Caco-2 (cell line): ENCODE measurements at regions of chr1 and their contacts with region 1.

Region 1: GRCh38 chr1:40668769-40669525 is 3.5 kb upstream of the RIMS3 start:
- DNase-seq: peak; percentile 55 to 70
- H3K4me3 ChIP-seq: no peak overlapping the region
- H3K4me3 Mint-ChIP-seq: no peak overlapping the region
- H3K27ac Mint-ChIP-seq: no peak overlapping the region
- H3K4me1 ChIP-seq: no peaks in the 10 kb centered on the region
- H3K4me1 Mint-ChIP-seq: no peaks in the 10 kb centered on the region
- H3K27me3 ChIP-seq: no peaks in the 10 kb centered on the region
- H3K27me3 Mint-ChIP-seq: peaks cover 4% of the 10 kb centered on the region
- CTCF ChIP-seq: peak; percentile 65 to 77

Region 2: DNA sequence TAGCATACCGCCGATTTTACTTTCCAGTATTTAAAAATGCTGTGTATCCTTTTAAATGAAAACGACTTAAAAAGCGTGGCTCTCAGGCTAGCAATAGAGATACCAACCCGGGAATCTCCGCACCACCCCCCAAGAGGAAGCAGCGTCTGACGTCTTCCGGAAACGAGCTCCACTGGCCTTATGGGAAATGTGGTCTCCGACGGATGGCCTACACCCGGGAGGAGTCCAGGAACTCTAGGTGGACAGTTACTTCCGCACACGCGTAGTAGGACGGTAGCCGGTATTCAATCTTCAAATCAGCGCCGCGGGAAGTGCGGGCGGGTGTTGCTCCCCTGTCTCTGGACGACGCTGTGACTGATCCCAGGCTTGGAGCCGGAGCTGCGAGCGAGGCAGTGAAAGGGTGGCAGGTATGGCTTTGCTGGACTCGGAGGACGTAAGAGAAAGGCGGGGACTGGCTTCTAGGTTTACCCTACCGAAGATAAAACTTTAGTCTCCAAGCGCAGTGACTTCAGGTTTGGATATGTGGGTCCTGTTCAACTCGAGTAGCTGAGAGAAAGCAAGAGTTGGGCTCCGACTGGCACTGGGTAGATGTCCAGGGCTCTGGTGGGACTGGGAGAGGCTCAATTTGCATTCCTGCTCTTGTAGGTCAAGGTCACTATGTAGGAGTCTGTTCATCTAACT is 137.4 kb before region 1 on chr1 and contains the start of gene ZNF684:
- CTCF ChIA-PET with region 1: no interaction called
- POLR2A ChIA-PET with region 1: no interaction called
- intact Hi-C with region 1: loop called (anchors 5 kb)
- DNase-seq: peak; percentile 81 to 91
- H3K4me3 ChIP-seq: peak within 1 kb of the TSS; percentile 47
- H3K4me3 Mint-ChIP-seq: peak within 1 kb of the TSS; percentile 88
- H3K27ac Mint-ChIP-seq: peak within 1 kb of the TSS; percentile 89
- H3K4me1 ChIP-seq: 0 out of 2 replicates have a peak, but pooled peaks cover 6% of the 10 kb centered on the region
- H3K4me1 Mint-ChIP-seq: no peaks in the 10 kb centered on the region
- H3K27me3 ChIP-seq: no peaks in the 10 kb centered on the region
- H3K27me3 Mint-ChIP-seq: peaks cover 2% of the 10 kb centered on the region
- CTCF ChIP-seq: no peak
- total RNA-seq, gene ZNF684: 2.6 and 3.2 TPM in 2 replicates

Region 3: GRCh38 chr1:40630488-40631381 is 38.2 kb before region 1 on chr1:
- CTCF ChIA-PET with region 1: no interaction called
- POLR2A ChIA-PET with region 1: no interaction called
- intact Hi-C with region 1: loop called (anchors 5 kb)
- DNase-seq: peak; percentile 14 to 21
- H3K4me3 ChIP-seq: no peak overlapping the region
- H3K4me3 Mint-ChIP-seq: no peak overlapping the region
- H3K27ac Mint-ChIP-seq: no peak overlapping the region
- H3K4me1 ChIP-seq: no peaks in the 10 kb centered on the region
- H3K4me1 Mint-ChIP-seq: no peaks in the 10 kb centered on the region
- H3K27me3 ChIP-seq: no peaks in the 10 kb centered on the region
- H3K27me3 Mint-ChIP-seq: no peaks in the 10 kb centered on the region
- CTCF ChIP-seq: peak in 1 of 2 experiments; percentile 11

Region 4: DNA sequence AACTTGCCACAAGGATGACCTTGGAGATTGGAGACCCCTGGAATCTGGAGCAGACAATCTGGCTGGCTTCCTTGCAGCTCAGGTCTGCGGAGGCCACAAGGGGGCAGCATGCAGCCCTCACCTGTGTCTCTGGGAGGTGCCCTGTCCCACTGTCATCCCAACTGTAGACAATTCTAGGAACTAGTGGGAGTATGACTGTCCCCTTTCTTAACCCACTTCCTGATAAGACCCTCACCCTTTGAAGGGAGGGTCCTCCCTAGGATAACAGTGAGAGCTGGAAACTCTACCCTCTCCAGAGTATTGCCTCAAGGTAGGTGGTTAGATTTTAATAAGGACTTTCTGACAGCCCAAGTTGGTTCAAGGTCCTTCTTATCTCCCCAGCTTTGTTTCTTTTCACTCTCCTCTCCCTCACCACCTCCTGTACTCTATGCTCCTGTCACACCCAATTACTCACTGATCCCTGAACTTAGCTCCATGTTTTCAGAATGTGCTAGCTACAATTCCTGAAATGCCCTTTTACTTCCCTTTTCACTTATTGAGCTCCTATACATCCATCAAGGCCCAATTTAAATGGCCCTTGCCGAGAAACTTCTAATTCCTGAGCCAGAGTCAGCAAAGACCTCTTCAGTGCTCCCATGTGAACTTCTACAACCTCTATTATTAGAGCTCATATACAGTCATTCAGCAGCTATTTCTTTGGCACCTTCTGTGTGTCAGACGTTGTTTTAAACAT is 105.5 kb after region 1 on chr1:
- CTCF ChIA-PET with region 1: no interaction called
- POLR2A ChIA-PET with region 1: no interaction called
- intact Hi-C with region 1: no loop called
- DNase-seq: peak; percentile 53 to 74
- H3K4me3 ChIP-seq: no peak overlapping the region
- H3K4me3 Mint-ChIP-seq: no peak overlapping the region
- H3K27ac Mint-ChIP-seq: no peak overlapping the region
- H3K4me1 ChIP-seq: no peaks in the 10 kb centered on the region
- H3K4me1 Mint-ChIP-seq: no peaks in the 10 kb centered on the region
- H3K27me3 ChIP-seq: no peaks in the 10 kb centered on the region
- H3K27me3 Mint-ChIP-seq: no peaks in the 10 kb centered on the region
- CTCF ChIP-seq: peak; percentile 66 to 72